Dorsolateral prefrontal cortex (tissue), 120 donors: ENCODE measurements at regions of chr10 and their contacts with region 1.

Region 1: DNA sequence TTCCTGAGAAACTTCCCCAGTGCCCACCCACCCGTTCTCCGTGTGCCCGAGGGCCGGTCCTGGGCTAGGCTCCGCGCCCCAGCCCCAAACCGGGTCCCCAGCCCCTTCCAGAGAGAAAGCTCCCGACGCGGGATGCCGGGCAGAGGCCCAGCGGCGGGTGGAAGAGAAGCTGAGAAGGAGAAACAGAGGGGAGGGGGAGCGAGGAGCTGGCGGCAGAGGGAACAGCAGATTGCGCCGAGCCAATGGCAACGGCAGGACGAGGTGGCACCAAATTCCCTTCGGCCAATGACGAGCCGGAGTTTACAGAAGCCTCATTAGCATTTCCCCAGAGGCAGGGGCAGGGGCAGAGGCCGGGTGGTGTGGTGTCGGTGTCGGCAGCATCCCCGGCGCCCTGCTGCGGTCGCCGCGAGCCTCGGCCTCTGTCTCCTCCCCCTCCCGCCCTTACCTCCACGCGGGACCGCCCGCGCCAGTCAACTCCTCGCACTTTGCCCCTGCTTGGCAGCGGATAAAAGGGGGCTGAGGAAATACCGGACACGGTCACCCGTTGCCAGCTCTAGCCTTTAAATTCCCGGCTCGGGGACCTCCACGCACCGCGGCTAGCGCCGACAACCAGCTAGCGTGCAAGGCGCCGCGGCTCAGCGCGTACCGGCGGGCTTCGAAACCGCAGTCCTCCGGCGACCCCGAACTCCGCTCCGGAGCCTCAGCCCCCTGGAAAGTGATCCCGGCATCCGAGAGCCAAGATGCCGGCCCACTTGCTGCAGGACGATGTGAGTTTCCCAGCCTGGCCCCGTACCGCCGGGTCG is at the start of gene SCD:
- DNase-seq: peak; percentile 88 to 98 (median 97)
- H3K4me3 ChIP-seq: peak within 1 kb of the TSS; percentile 61 to 97 (median 89)
- H3K27ac ChIP-seq: peak within 1 kb of the TSS; percentile 40 to 99 (median 97)
- H3K27me3 ChIP-seq: no peaks in the 10 kb centered on the region
- CTCF ChIP-seq: peak in 16 of 56 donors; percentile 3 to 35 (median 12)
- total RNA-seq, gene SCD: 133 to 1,473 (median 374) TPM

Region 2: GRCh38 chr10:100373298-100374136 is 26.6 kb after region 1 on chr10:
- intact Hi-C with region 1: loop called (anchors 1 to 2 kb)
- DNase-seq: peak; percentile 98 to 100 (median 99)
- H3K4me3 ChIP-seq: peak overlapping the region; percentile 40 to 98 (median 77)
- H3K27ac ChIP-seq: peak overlapping the region; percentile 91 to 100 (median 99)
- H3K27me3 ChIP-seq: no peaks in the 10 kb centered on the region
- CTCF ChIP-seq: peak in 12 of 56 donors; percentile 3 to 41 (median 14)

Region 3: GRCh38 chr10:100529475-100530298 is 182.7 kb after region 1 on chr10 and contains the start of gene NDUFB8:
- intact Hi-C with region 1: loop called in 1 of 2 experiments (anchors 10 kb)
- DNase-seq: peak; percentile 79 to 94 (median 90)
- H3K4me3 ChIP-seq: peak within 1 kb of the TSS; percentile 72 to 99 (median 92)
- H3K27ac ChIP-seq: peak within 1 kb of the TSS; percentile 42 to 94 (median 86)
- H3K27me3 ChIP-seq: no peaks in the 10 kb centered on the region
- CTCF ChIP-seq: peak in 37 of 56 donors; percentile 4 to 58 (median 32)
- total RNA-seq, gene NDUFB8: 219 to 414 (median 337) TPM